Esophagus muscularis mucosa (tissue), 4 donors: ENCODE measurements at regions of chr1 and their contacts with region 1.

Region 1: DNA sequence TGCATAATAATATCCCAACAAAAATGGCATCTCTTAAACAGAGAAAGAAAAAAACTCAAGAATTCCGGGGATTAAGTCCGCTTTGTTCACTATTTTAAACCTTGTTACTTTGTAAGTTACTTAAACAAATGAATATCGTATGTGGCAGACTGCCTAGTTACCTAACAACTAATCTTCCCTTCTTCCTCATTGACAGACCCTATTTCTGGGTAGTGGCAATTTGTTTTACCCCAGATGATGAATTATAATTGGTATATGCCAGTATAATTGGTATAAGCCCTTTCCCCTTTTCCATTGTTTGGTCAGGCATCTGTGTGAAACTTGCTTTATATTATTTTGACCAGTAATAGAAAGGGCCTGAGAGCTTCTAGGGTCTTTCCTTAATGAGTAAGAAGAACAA is 52.4 kb downstream of the CDC42BPA start:
- DNase-seq: no peak
- H3K4me3 ChIP-seq: no peak overlapping the region
- H3K27ac ChIP-seq: no peak overlapping the region
- H3K4me1 ChIP-seq: peaks cover 4 to 45% (median 35%) of the 10 kb centered on the region in 4 donors
- H3K27me3 ChIP-seq: no peaks in the 10 kb centered on the region
- CTCF ChIP-seq: no peak
- EP300 ChIP-seq: no peak
- POLR2A ChIP-seq: no peak

Region 2: GRCh38 chr1:227245613-227246320 is 20.1 kb before region 1 on chr1:
- intact Hi-C with region 1: loop called (anchors 2 kb)
- DNase-seq: no peak
- H3K4me3 ChIP-seq: no peak overlapping the region
- H3K27ac ChIP-seq: no peak overlapping the region
- H3K4me1 ChIP-seq: peaks cover 17 to 24% (median 21%) of the 10 kb centered on the region in 4 donors
- H3K27me3 ChIP-seq: no peaks in the 10 kb centered on the region
- CTCF ChIP-seq: no peak
- EP300 ChIP-seq: no peak
- POLR2A ChIP-seq: no peak

Region 3: GRCh38 chr1:227697321-227697864 is 431.5 kb after region 1 on chr1:
- intact Hi-C with region 1: no loop called
- DNase-seq: no peak
- H3K4me3 ChIP-seq: no peak overlapping the region
- H3K27ac ChIP-seq: no peak overlapping the region
- H3K4me1 ChIP-seq: no peaks in the 10 kb centered on the region
- H3K27me3 ChIP-seq: no peaks in the 10 kb centered on the region
- CTCF ChIP-seq: no peak
- EP300 ChIP-seq: no peak
- POLR2A ChIP-seq: no peak